ENCODE measurements at regions of chr11 and their contacts with region 1.

Region 1: DNA sequence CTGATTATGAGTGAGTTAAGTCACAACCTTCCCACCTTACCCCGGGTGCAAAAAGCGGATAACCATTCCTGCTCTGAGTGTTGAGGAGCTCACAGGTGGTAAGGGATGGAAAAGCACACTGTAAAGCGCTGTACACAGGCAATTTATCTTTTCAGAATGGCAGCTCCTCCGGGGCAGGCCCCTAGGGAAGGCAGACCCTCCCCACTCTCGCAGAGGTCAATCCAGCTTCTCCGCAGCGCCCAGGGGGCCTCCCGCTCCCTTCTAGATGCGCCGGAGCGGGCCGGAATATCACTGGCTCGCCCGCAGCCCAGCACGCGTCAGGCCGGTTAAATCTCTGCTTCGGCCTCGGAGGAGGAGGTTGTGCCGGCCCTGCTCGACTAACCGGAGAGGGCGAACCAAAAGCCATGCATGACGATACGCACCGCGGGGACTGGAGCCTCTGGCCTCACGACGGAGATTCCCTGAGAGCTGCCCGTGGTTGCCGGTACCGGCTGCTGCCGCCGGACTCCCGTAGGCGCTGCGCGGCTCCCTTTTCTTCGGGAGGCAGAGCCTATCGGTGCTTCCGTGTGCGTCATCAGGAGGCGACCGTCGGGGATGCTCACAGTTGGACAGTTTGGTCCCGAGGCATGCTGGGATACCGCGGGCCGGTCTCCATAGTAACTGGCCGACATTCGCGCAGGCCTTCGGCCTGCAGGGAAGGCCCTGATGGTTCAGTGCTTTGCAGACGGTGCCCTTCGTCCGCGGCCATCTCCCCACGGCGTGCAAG is at the start of gene BRMS1:
- DNase-seq: peak; percentile 100
- ATAC-seq: peak; percentile 89
- total RNA-seq, gene BRMS1: 14.6 TPM

Region 2: DNA sequence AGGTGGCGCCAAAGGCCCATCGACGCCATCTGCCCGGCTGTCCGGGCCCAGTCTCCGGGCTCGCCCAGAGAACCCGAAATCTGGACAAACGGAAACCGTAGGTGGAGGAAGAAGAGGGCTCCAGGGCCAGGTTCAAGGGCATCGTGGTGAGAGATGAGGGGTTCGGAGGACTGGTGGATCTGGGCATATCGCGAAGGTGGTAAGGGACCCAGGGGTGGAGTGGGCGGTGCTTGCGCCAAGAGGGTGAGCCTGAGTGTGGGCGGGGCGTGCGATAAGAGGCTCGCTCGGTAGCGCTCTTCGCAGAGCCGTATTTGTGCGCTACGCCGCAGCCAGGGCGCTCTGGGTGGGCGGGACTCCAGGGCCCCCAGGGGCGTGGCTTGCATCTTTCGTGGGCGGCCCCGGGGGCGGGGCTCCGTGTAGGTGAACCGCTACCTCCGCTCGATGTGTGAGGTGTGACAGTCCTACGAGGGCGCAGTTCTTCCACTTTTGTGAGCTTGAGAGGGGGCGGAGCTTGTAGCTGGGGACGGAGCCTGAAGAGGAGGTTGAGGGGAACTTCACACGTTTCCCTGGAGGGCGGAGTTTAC is 32.7 kb before region 1 on chr11:
- intact Hi-C with region 1: loop called (anchors 5 kb)
- DNase-seq: peak; percentile 95
- ATAC-seq: peak; percentile 80

Region 3: DNA sequence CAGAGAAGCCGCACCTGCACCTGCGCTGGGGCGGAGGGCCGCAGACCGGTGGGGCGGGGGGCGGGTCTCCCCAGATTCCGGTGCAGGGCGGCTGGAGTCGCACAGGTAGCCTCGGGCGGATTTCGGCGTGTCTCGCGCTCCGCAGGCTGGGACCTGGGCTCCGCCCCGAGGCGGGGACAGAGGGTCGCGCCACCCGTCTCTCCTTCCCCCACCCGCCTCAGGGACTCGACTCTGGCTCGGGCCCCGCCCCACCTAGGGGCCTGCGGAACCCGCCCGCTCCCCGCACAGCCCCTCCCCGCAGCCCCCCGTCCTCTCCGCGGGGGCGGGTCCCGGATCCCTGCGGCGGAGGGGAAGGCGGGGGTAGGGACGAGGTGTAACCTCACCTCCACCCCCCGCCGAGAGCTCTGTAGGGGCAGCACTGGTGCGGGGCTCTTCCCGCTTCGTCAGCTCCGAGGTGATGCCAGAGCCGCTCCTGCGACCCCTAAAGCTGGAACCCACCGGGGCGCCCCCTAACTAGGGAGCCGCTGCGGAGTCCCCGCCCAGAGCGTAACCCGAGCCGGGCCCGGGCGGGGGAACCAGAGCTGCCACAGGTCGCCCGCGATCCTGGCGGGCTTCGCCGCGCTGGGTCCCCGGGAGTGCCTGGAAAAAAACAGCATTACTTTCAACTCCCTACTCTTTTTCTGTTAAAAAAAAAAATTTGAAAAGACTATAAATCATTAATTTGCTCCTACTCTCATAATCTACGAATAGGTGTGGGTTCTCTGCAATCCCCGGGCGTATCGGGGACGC is 27.1 kb after region 1 on chr11 and contains the start of gene SLC29A2:
- intact Hi-C with region 1: loop called (anchors 2 kb)
- DNase-seq: peak; percentile 76
- ATAC-seq: peak; percentile 82
- total RNA-seq, gene SLC29A2: 16.8 TPM

Region 4: GRCh38 chr11:66386171-66387069 is 41.7 kb after region 1 on chr11:
- intact Hi-C with region 1: loop called (anchors 5 kb)
- DNase-seq: peak; percentile 79
- ATAC-seq: peak; percentile 83